T-cell (primary cell): ENCODE measurements at regions of chr6 and their contacts with region 1.

Region 1: DNA sequence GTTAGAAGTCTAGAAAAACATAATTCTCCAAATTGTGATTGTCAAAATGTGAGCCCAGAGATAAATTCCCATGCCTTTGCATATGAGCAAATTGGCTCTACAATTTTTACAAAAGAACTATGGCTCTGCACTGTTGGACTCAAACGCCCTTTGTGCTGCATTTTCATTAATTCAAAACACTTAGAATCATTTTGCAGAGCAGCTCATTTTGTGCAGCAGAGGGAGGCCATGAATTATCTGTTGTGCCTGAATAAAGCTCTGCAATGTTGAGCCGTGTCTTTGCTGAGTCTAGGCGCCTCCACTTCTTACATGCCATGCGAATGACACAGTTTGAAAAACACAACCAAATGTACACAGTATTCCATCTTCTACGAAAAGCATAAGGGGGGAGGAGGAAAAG is 230.2 kb downstream of the PRKN start:
- DNase-seq: no peak
- ATAC-seq: no peak
- H3K4me3 ChIP-seq: no peak overlapping the region
- H3K4me3 Mint-ChIP-seq: no peak overlapping the region
- H3K27ac ChIP-seq: no peak overlapping the region
- H3K27ac Mint-ChIP-seq: no peak overlapping the region
- H3K4me1 ChIP-seq: no peaks in the 10 kb centered on the region
- H3K4me1 Mint-ChIP-seq: no peaks in the 10 kb centered on the region
- H3K27me3 ChIP-seq: no peaks in the 10 kb centered on the region
- H3K27me3 Mint-ChIP-seq: no peaks in the 10 kb centered on the region

Region 2: GRCh38 chr6:162538643-162539064 is 41.3 kb after region 1 on chr6:
- CTCF ChIA-PET with region 1: no interaction called
- POLR2A ChIA-PET with region 1: interaction called in 1 of 2 experiments, 13 read pairs
- DNase-seq: no peak
- ATAC-seq: no peak
- H3K4me3 ChIP-seq: no peak overlapping the region
- H3K4me3 Mint-ChIP-seq: no peak overlapping the region
- H3K27ac ChIP-seq: no peak overlapping the region
- H3K27ac Mint-ChIP-seq: no peak overlapping the region
- H3K4me1 ChIP-seq: no peaks in the 10 kb centered on the region
- H3K4me1 Mint-ChIP-seq: no peaks in the 10 kb centered on the region
- H3K27me3 ChIP-seq: no peaks in the 10 kb centered on the region
- H3K27me3 Mint-ChIP-seq: no peaks in the 10 kb centered on the region

Region 3: DNA sequence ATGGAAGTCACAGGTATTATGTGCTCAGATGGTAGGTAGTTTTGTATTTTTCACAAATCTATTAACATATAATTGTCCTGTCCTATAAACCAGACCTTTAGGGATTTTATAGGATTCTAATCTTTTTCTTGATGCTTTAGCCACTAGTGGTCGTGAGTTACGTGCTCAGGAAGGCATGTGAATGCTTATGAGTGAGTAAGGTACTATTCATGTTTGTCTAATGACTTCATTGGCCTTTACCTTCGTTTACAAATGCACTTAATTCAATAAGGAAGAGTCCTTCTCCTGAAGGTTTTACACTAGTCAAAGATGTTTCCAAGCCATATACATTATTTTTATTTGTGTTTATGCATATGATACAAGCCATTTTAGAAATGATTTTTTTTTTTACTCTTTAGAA is 253.4 kb after region 1 on chr6:
- CTCF ChIA-PET with region 1: no interaction called
- POLR2A ChIA-PET with region 1: no interaction called
- DNase-seq: no peak
- ATAC-seq: no peak
- H3K4me3 ChIP-seq: no peak overlapping the region
- H3K4me3 Mint-ChIP-seq: no peak overlapping the region
- H3K27ac ChIP-seq: no peak overlapping the region
- H3K27ac Mint-ChIP-seq: no peak overlapping the region
- H3K4me1 ChIP-seq: no peaks in the 10 kb centered on the region
- H3K4me1 Mint-ChIP-seq: no peaks in the 10 kb centered on the region
- H3K27me3 ChIP-seq: no peaks in the 10 kb centered on the region
- H3K27me3 Mint-ChIP-seq: peaks cover 0 to 4% of the 10 kb centered on the region in 2 donors

Region 4: DNA sequence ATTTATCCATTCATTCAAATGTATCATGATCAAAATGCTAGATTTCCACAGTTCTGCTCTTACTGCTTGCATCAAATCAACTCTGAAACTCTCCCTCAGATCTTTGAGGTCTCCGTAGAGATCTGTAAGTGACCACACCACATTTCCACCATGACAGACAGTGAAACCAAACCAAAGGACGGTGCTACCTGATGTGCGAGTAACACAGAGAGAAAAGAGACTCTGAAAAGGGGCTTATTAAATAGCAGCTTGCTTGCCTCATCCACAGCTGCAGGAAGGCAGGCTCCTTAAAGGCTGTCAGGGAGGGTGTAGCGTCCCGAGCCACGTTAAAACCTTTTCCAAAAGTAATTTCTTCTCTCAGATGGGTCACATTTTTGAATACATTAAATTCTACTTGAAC is 566.2 kb after region 1 on chr6:
- CTCF ChIA-PET with region 1: no interaction called
- POLR2A ChIA-PET with region 1: no interaction called
- DNase-seq: no peak
- ATAC-seq: no peak
- H3K4me3 ChIP-seq: no peak overlapping the region
- H3K4me3 Mint-ChIP-seq: no peak overlapping the region
- H3K27ac ChIP-seq: no peak overlapping the region
- H3K27ac Mint-ChIP-seq: no peak overlapping the region
- H3K4me1 ChIP-seq: no peaks in the 10 kb centered on the region
- H3K4me1 Mint-ChIP-seq: no peaks in the 10 kb centered on the region
- H3K27me3 ChIP-seq: no peaks in the 10 kb centered on the region
- H3K27me3 Mint-ChIP-seq: no peaks in the 10 kb centered on the region